Cardiac septum (tissue), 1 donor: ENCODE measurements at regions of chrX and their contacts with region 1.

Region 1: GRCh38 chrX:154762523-154763289 is at the start of gene DKC1:
- DNase-seq: peak; percentile 98
- total RNA-seq, gene DKC1: 22.4 TPM

Region 2: DNA sequence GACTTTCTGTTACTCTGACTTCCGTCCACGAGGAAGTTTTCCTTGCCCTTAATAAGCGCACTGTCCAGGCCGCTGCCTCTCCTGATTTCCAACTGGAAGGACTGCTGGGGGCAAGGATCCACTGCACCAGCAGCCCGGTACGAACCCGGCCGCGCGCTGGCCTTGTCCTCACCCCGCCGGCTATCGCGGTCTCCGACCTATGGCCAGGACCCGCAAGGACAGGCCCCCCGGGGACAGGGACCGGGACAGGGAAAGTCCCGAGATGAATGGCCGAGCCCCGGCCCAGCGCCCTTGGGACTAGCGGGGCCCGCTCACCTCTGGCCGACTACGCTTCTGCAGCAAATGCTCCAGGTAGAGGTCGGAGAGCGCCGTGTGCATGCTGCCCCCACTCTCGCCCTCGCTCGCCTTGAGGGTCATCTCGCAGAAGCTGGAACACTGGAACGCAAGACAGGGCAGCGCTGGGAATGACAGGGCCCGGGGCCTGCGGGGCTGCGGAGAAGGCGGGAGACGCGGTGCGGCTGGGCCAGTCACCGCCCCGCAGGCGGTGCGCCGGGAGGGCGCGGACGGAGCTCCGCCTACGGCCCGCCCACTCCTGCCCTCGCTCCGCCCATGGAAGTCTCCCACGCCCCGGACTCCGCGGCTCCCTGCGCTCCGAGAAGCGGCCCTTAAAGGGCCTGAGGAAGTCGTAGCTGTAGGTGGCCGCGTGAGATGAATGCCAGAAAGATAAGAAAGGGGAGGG is 42.4 kb after region 1 on chrX and contains the start of gene MPP1:
- intact Hi-C with region 1: loop called (anchors 5 kb)
- DNase-seq: peak; percentile 91
- total RNA-seq, gene MPP1: 30.0 TPM